Activated naive CD4-positive, alpha-beta T cell treated with anti-CD3 and anti-CD28 coated beads, Interleukin-2, amount 10 ng/mL, durations not matched to agents 7 days and 5 days (primary cell): ENCODE measurements at regions of chr20 and their contacts with region 1.

Region 1: GRCh38 chr20:31822421-31823330 is 3.5 kb downstream of the MYLK2 start:
- DNase-seq: peak; percentile 82
- H3K4me3 Mint-ChIP-seq: no peak overlapping the region
- H3K27ac Mint-ChIP-seq: peak overlapping the region; percentile 7
- H3K4me1 Mint-ChIP-seq: peaks cover 11% of the 10 kb centered on the region
- H3K27me3 Mint-ChIP-seq: peaks cover 19% of the 10 kb centered on the region

Region 2: DNA sequence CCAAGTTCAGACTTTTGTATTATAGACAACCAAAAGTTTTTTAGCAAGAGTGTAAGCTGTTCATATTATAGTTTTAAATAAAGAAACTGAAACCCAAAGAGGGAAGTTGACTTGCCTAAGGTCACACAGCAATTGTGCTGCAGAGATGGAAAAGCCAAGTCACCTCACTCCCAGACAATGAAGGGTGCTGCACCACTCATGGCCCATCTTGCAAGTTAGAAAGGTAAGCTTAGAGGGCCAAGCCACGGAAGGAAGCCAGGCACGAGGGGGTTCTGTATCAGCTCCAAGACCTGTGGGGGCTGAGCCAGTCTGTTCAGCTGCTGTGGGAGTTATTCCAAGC is 348.6 kb before region 1 on chr20:
- CTCF ChIA-PET with region 1: no interaction called
- DNase-seq: no peak
- H3K4me3 Mint-ChIP-seq: no peak overlapping the region
- H3K27ac Mint-ChIP-seq: no peak overlapping the region
- H3K4me1 Mint-ChIP-seq: no peaks in the 10 kb centered on the region
- H3K27me3 Mint-ChIP-seq: peaks cover 43% of the 10 kb centered on the region

Region 3: DNA sequence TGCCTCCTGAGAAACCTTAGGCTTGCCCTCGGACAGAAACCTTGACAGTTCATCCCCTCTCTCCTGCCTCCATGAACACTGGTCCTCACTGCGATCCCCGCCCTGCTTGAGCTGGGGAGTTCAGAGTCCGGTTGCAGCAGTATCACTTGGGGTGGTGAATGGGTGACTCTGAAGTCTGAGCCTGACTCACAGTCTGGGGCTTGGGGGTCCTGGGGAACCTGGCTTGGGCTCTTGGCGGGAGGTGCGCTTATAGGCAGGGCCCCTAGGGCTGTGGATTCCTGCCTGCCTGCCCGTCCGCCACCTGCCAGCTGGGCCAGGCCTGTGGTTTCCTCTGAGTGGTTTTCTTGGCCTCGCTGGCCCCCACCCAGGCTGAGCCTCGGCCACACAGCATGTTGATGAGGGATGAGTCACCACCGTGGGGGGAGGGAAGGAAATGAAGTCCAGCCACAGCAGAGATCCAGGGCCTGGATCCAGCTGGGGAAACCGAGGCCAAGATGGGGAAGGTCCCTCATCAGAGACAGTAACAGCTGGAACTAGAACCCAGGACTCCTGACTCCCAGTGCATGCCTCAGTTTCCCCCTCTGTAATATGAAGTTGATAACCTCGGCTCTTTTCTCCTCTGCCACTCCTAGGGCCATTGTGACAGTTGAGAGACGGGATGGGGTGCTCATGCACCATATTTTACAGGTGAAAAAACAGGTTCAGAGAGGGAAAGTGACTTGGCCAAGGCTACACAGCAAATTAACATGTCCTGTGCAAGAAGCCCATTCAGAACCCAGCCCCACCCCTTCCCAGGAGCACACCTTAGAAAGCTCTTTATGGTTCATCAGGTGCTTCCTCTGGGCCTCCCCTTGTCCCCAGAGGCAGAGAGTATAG is 13.5 kb after region 1 on chr20:
- CTCF ChIA-PET with region 1: interaction called, 24 read pairs
- DNase-seq: peak; percentile 49
- H3K4me3 Mint-ChIP-seq: no peak overlapping the region
- H3K27ac Mint-ChIP-seq: no peak overlapping the region
- H3K4me1 Mint-ChIP-seq: peaks cover 12% of the 10 kb centered on the region
- H3K27me3 Mint-ChIP-seq: peaks cover 5% of the 10 kb centered on the region

Region 4: GRCh38 chr20:31842471-31843157 is 19.9 kb after region 1 on chr20:
- CTCF ChIA-PET with region 1: interaction called, 51 read pairs
- DNase-seq: no peak
- H3K4me3 Mint-ChIP-seq: no peak overlapping the region
- H3K27ac Mint-ChIP-seq: no peak overlapping the region
- H3K4me1 Mint-ChIP-seq: no peaks in the 10 kb centered on the region
- H3K27me3 Mint-ChIP-seq: peaks cover 17% of the 10 kb centered on the region

Region 5: DNA sequence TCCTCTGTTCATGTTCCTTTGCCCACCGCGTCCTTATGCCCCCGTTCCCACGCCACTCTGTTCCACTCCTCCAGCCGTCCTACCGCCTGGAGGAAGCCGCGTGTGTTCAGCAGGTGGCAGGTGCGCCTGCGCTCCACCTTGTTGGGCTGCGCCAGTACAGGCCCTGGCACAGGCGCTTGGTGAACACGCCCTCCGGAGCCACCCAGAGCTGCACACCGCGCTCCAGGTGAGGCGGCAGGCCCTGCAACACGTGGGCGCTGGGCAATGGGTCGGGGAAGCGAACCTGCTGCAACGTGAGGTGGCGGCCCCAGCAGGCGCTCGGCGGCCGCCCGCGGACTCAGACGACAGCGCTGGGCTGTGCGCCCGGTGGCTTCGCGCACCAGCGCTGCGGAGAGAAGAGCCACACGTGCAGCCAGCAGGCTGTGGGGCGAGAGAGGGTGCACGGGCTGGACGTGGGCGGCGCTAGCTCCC is 26.8 kb after region 1 on chr20:
- CTCF ChIA-PET with region 1: interaction called, 51 read pairs
- DNase-seq: no peak
- H3K4me3 Mint-ChIP-seq: no peak overlapping the region
- H3K27ac Mint-ChIP-seq: no peak overlapping the region
- H3K4me1 Mint-ChIP-seq: no peaks in the 10 kb centered on the region
- H3K27me3 Mint-ChIP-seq: peaks cover 64% of the 10 kb centered on the region

Region 6: DNA sequence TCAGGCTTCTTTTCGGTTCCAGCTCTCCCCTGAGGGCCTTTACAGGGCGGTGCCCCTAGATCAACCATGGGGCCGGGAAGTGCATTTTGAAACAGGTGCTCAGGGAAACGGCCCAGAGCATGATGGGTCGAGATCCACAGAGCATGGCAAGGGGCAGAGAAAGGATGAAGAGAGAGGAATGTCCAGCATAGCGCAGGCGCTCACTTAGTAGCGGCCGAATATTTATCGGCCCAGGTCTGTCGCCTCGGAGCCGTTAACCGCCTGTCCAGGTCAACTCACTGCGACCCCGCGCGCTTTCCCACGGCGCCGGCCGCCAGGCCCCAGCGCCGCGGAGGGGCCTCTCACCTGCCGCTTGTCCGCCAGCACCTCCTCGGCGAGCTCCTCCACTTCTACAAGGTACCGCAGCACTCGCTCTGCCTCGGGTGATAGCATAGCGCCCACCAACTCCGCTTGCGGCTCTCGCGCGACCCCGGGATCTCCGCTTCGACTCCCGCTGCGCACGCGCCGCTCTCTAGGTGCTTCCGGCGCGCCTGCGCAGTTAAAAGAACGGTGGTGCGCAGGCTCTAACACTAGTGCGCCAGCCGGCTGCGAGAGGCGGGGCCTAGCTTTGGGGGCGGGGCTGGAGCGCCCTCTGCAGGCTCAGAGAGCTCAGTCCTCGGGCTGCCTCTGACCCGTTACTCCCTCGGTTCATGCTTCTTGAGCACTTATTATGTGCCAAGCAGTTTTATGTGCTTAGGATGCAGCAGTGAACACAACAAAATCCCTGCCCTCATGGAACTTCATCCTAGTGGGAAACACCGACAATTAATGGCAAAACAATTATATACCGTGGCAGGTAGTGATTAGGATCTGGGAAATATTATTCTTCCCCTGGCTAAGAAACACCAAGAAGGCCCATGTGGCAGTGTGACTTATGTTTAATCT is 129.1 kb after region 1 on chr20 and contains the start of gene PDRG1:
- CTCF ChIA-PET with region 1: interaction called, 16 read pairs
- DNase-seq: peak; percentile 97
- H3K4me3 Mint-ChIP-seq: peak within 1 kb of the TSS; percentile 93
- H3K27ac Mint-ChIP-seq: peak within 1 kb of the TSS; percentile 88
- H3K4me1 Mint-ChIP-seq: peaks cover 27% of the 10 kb centered on the region
- H3K27me3 Mint-ChIP-seq: peaks cover 24% of the 10 kb centered on the region

Region 7: DNA sequence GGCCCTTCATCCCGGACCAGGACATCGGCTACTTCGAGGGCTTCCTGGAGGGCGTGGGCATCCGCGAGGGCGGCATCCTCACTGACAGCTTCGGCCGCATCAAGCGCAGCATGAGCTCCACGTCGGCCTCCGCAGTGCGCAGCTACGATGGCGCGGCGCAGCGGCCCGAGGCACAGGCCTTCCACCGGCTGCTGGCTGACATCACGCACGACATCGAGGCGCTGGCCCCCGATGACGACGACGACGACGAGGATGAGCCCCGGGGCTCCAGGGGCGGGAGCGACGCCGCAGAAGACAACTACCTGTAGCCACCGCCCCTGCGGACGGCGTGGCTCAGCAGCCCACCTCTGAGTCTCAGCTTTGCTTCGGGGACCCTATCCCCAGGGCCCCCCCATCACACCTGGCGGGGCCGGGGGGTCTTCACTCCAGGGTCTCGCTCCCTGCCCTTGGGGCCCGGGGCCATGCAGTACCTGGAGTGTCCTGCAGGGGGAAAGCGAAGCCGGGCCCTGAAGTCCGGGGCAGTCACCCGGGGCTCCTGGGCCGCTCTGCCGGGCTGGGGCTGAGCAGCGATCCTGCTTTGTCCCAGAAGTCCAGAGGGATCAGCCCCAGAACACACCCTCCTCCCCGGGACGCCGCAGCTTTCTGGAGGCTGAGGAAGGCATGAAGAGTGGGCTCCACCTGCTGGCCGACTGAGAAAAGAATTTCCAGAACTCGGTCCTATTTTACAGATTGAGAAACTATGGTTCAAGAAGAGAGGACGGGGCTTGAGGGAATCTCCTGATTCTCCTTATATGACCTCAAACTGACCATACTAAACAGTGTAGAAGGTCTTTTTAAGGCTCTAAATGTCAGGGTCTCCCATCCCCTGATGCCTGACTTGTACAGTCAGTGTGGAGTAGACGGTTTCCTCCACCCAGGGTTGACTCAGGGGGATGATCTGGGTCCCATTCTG is 208.6 kb after region 1 on chr20:
- CTCF ChIA-PET with region 1: interaction called, 32 read pairs
- DNase-seq: peak; percentile 70
- H3K4me3 Mint-ChIP-seq: no peak overlapping the region
- H3K27ac Mint-ChIP-seq: no peak overlapping the region
- H3K4me1 Mint-ChIP-seq: peaks cover 3% of the 10 kb centered on the region
- H3K27me3 Mint-ChIP-seq: peaks cover 55% of the 10 kb centered on the region

Region 8: DNA sequence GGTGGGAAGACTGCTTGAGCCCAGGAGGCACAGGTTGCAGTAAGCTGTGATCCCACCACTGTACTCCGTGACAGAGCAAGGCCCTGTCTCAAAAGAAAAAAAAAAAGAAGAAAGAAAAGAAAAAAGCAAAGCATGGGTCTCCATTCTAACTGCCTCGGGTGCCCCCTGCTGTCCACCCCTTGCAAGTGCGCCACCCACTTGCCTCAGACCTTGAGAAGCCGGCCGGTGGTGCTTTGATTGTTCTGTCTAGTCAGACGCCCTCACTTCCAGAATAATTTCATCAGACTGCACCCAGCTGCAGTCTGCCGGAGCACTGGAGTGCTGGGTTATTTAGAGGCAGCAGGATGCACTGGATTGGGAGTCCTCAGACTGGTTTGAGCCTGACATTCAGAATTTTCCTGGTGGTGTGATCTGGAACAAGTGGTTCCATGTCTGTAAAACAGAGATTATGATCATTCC is 269.2 kb after region 1 on chr20:
- CTCF ChIA-PET with region 1: interaction called, 12 read pairs
- DNase-seq: peak; percentile 87
- H3K4me3 Mint-ChIP-seq: no peak overlapping the region
- H3K27ac Mint-ChIP-seq: no peak overlapping the region
- H3K4me1 Mint-ChIP-seq: no peaks in the 10 kb centered on the region
- H3K27me3 Mint-ChIP-seq: peaks cover 37% of the 10 kb centered on the region